ENCODE measurements at regions of chr22 and their contacts with region 1.

Region 1: GRCh38 chr22:20079745-20080444 is at the start of gene DGCR8:
- DNase-seq: peak; percentile 28
- ATAC-seq: peak; percentile 89
- H3K4me3 ChIP-seq: peak within 1 kb of the TSS; percentile 95
- H3K27ac ChIP-seq: peak within 1 kb of the TSS; percentile 71
- H3K4me1 ChIP-seq: peaks cover 8% of the 10 kb centered on the region
- H3K27me3 ChIP-seq: no peaks in the 10 kb centered on the region
- CTCF ChIP-seq: no peak
- EP300 ChIP-seq: no peak
- POLR2A ChIP-seq: peak; percentile 83
- RAD21 ChIP-seq: no peak
- polyA plus RNA-seq, gene DGCR8: 1.2 to 2.5 TPM

Region 2: GRCh38 chr22:20020533-20021195 is 59.2 kb before region 1 on chr22 and contains the start of gene TANGO2:
- CTCF ChIA-PET with region 1: no interaction called
- POLR2A ChIA-PET with region 1: no interaction called
- RAD21 ChIA-PET with region 1: interaction called, 5 read pairs
- SMC1A ChIA-PET with region 1: no interaction called
- in situ Hi-C with region 1: no loop called
- intact Hi-C with region 1: loop called (anchors 10 kb)
- DNase-seq: peak; percentile 37
- ATAC-seq: peak; percentile 94
- H3K4me3 ChIP-seq: peak within 1 kb of the TSS; percentile 99
- H3K27ac ChIP-seq: peak within 1 kb of the TSS; percentile 81
- H3K4me1 ChIP-seq: peaks cover 13% of the 10 kb centered on the region
- H3K27me3 ChIP-seq: peaks cover 0 to 3% of the 10 kb centered on the region in 2 experiments; a peak in 2 of 4 replicates
- CTCF ChIP-seq: no peak
- EP300 ChIP-seq: no peak
- POLR2A ChIP-seq: peak; percentile 90
- RAD21 ChIP-seq: no peak
- polyA plus RNA-seq, gene TANGO2: 4.0 to 5.0 TPM

Region 3: GRCh38 chr22:20069331-20070042 is 10.4 kb before region 1 on chr22:
- CTCF ChIA-PET with region 1: interaction called, 3 read pairs
- POLR2A ChIA-PET with region 1: interaction called, 11 read pairs
- RAD21 ChIA-PET with region 1: no interaction called
- SMC1A ChIA-PET with region 1: no interaction called
- in situ Hi-C with region 1: no loop called
- intact Hi-C with region 1: no loop called
- DNase-seq: no peak
- ATAC-seq: no peak
- H3K4me3 ChIP-seq: no peak overlapping the region
- H3K27ac ChIP-seq: no peak overlapping the region
- H3K4me1 ChIP-seq: no peaks in the 10 kb centered on the region
- H3K27me3 ChIP-seq: no peaks in the 10 kb centered on the region
- CTCF ChIP-seq: no peak
- EP300 ChIP-seq: no peak
- POLR2A ChIP-seq: no peak
- RAD21 ChIP-seq: no peak

Measured in GM12878 (cell line).